Gastrocnemius medialis (tissue), 4 donors: ENCODE measurements at regions of chr1 and their contacts with region 1.

Region 1: GRCh38 chr1:19439464-19440171 is 45.7 kb downstream of the CAPZB start:
- DNase-seq: peak; percentile 87 to 90
- ATAC-seq: peak; percentile 43 to 63
- H3K4me3 ChIP-seq: no peak overlapping the region
- H3K27ac ChIP-seq: peak overlapping the region; percentile 80 to 89 (median 84)
- H3K4me1 ChIP-seq: peaks cover 83 to 90% of the 10 kb centered on the region in 2 donors
- H3K27me3 ChIP-seq: no peaks in the 10 kb centered on the region
- CTCF ChIP-seq: peak in 1 of 5 experiments; percentile 14
- POLR2A ChIP-seq: no peak

Region 2: DNA sequence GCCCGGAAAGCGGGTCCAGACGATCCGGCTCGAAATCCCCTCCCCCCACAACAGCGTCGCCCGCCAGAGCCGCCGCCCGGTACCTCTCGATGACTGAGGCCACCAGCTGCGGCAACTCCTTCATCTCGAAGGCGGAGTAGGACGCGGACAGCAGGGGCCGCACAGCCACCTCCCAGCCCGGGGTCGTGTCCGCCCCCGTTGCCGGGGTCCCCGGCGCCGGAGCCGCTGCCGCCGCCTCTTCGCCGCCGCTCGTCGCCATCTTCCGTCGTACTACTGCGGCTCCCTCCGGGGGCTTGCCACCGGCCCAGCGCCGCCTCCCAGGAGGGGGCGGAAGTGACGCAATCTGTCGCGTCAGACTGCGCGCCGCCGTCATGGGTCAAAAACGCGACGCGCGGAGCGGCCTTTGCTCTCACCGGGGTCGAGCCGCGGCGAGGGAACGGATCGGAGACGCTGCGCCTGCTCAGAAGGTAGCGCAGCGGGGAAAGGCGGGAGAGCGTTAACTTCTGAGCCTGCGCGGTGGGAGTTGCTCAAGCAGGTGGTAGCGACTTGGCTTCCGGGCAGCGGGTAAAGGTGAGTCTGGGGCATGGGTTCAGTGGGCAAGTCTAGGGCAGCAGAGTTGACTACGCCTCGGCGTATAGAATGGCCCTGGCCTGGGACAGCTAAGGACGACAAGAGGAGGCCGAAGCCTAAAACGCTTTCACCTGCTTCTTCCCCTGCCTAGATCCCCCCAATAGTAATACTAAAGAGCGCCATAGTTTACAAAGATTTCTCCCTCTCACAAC is 229.4 kb before region 1 on chr1 and contains the start of gene UBR4:
- in situ Hi-C with region 1: no loop called
- intact Hi-C with region 1: loop called (anchors 10 kb)
- DNase-seq: peak; percentile 91 to 94
- ATAC-seq: peak; percentile 92 to 95
- H3K4me3 ChIP-seq: peak within 1 kb of the TSS; percentile 84 to 92 (median 88)
- H3K27ac ChIP-seq: peak within 1 kb of the TSS; percentile 93 to 97 (median 95)
- H3K4me1 ChIP-seq: peaks cover 64 to 74% of the 10 kb centered on the region in 2 donors
- H3K27me3 ChIP-seq: no peaks in the 10 kb centered on the region
- CTCF ChIP-seq: peak in 1 of 5 experiments; percentile 3
- POLR2A ChIP-seq: peak; percentile 97 to 98
- total RNA-seq, gene UBR4: 156 to 293 (median 197) TPM

Region 3: GRCh38 chr1:19336543-19336942 is 103.1 kb before region 1 on chr1:
- in situ Hi-C with region 1: no loop called
- intact Hi-C with region 1: no loop called
- DNase-seq: no peak
- ATAC-seq: no peak
- H3K4me3 ChIP-seq: no peak overlapping the region
- H3K27ac ChIP-seq: no peak overlapping the region
- H3K4me1 ChIP-seq: no peaks in the 10 kb centered on the region
- H3K27me3 ChIP-seq: no peaks in the 10 kb centered on the region
- CTCF ChIP-seq: no peak
- POLR2A ChIP-seq: no peak

Region 4: DNA sequence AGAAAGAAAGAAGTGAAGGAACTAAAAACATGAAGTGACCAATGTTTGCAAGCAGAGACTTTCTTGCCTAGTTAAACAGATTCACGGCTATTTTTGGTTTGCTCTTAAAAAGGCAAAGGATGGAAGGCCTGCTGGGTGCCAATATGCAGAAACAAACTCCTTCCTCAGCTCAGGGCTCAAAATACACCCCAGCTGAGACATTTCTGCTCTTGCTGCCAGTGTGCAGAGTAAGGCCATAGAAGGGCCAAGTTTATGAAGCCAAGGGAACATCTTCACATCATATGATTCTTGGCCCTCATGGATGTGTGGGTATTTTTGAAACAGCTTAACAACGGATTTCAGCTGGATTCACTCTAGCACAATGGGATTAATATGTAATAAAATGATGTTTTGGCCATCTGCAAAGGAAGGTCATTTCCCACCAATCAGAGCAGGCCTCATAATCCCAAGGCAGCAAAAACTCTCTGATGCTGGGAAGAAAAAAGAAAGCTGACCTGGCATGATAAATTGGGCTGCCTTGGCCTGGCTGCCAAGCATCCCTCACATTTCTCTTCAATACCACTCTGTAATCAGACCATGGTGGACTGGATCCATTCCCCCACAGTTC is 25.0 kb before region 1 on chr1:
- in situ Hi-C with region 1: no loop called
- intact Hi-C with region 1: loop called (anchors 2 kb)
- DNase-seq: peak; percentile 71 to 73
- ATAC-seq: peak; percentile 94 to 95
- H3K4me3 ChIP-seq: peak overlapping the region in 1 of 4 donors; percentile 4
- H3K27ac ChIP-seq: peak overlapping the region; percentile 61 to 82 (median 76)
- H3K4me1 ChIP-seq: peaks cover 70 to 74% of the 10 kb centered on the region in 2 donors
- H3K27me3 ChIP-seq: no peaks in the 10 kb centered on the region
- CTCF ChIP-seq: no peak
- POLR2A ChIP-seq: no peak

Region 5: DNA sequence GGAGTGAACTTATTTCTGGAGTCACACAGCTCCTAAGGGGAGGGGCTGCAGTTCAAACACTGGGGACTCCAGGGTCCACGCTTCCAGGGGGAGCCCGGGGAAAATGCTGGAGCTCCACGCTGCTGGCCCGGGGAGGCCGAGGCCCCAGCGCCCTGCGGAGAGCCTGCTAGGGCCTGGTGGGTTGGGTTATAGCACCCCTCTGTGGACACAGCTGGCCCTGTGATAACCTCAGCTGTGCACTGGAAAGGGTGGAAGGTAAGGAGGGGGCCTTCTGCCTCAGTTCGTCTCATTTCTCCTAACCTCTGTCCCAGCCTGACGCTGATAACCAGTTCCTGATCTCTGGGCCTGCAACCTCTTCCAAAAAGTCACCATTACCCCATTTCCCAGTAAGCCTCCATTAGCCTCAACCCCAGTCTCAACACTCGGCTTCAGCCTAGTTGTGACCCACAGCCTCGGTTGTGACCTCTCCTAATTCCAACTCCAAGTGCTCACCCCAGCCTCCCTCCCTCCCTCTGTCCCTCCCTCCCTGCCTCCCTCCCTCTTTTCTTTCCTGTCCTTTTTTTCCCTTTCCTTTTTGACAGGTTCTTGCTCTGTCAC is 211.6 kb after region 1 on chr1:
- in situ Hi-C with region 1: no loop called
- intact Hi-C with region 1: no loop called
- DNase-seq: peak in 1 of 2 donors; percentile 45
- ATAC-seq: peak; percentile 53 to 67
- H3K4me3 ChIP-seq: peak overlapping the region in 1 of 4 donors; percentile 2
- H3K27ac ChIP-seq: peak overlapping the region; percentile 61 to 79 (median 74)
- H3K4me1 ChIP-seq: peaks cover 5 to 26% of the 10 kb centered on the region in 2 donors
- H3K27me3 ChIP-seq: no peaks in the 10 kb centered on the region
- CTCF ChIP-seq: peak; percentile 64 to 80 (median 71)
- POLR2A ChIP-seq: no peak